ENCODE measurements at regions of chr2 and their contacts with region 1.

Region 1: DNA sequence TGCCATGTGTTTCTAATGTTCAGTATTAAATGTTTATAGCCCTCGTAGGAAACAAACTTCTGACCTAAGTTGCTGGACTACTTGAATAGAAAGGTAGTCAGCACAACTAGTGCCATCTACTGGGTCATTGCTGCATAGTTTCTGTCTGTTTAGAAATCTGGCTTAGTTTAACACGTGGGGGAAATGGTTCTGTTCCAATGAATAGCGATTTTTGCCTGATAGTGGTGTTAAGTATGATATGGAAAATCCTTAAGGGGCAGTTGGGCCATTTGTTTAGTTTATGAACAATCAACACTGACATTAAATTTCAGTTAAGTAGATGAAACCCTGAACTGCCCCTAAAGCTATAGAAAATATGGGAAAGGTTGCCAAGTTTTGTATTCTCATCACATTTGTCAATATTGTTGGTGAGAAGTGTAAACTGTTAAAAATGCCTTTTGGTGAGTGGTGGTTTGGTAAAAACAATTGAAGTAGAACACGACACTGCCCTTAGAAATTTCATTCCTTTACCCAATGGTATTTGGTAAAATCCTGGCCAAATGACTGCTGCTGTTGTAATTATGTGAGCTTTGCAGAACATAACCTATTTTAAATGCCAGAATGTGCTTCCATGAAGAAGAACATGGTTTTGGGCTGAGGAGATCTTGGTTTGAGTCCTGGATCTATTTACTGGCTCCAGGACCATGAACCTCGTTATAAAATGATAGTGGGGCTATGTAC is 13.2 kb downstream of the NABP1 start:
- DNase-seq: peak; percentile 59
- ATAC-seq: peak; percentile 68
- H3K4me3 ChIP-seq: no peak overlapping the region
- H3K27ac ChIP-seq: no peak overlapping the region
- H3K4me1 ChIP-seq: no peaks in the 10 kb centered on the region
- H3K27me3 ChIP-seq: no peaks in the 10 kb centered on the region
- CTCF ChIP-seq: peak; percentile 73 to 86 (median 77); a peak in 5 of 6 replicates
- EP300 ChIP-seq: no peak
- POLR2A ChIP-seq: no peak; the same call in 1 of the 2 replicates
- RAD21 ChIP-seq: peak; percentile 96

Region 2: GRCh38 chr2:191710411-191710900 is 19.3 kb after region 1 on chr2:
- CTCF ChIA-PET with region 1: interaction called, 8 read pairs
- POLR2A ChIA-PET with region 1: interaction called, 6 read pairs
- RAD21 ChIA-PET with region 1: interaction called, 3 read pairs
- SMC1A ChIA-PET with region 1: interaction called, 12 read pairs
- in situ Hi-C with region 1: no loop called
- intact Hi-C with region 1: no loop called
- DNase-seq: no peak
- ATAC-seq: no peak
- H3K4me3 ChIP-seq: no peak overlapping the region
- H3K27ac ChIP-seq: no peak overlapping the region
- H3K4me1 ChIP-seq: no peaks in the 10 kb centered on the region
- H3K27me3 ChIP-seq: no peaks in the 10 kb centered on the region
- CTCF ChIP-seq: no peak
- EP300 ChIP-seq: no peak
- POLR2A ChIP-seq: no peak
- RAD21 ChIP-seq: no peak

Measured in GM12878 (cell line).